Colonic mucosa (tissue), 4 donors: ENCODE measurements at regions of chr1 and their contacts with region 1.

Region 1: GRCh38 chr1:169367486-169368405 is at the starts of genes BLZF1 and NME7:
- DNase-seq: peak; percentile 99
- H3K4me3 ChIP-seq: peak within 1 kb of the TSS; percentile 68
- H3K27ac ChIP-seq: peak within 1 kb of the TSS; percentile 86
- H3K4me1 ChIP-seq: no peaks in the 10 kb centered on the region
- H3K27me3 ChIP-seq: no peaks in the 10 kb centered on the region
- CTCF ChIP-seq: no peak
- total RNA-seq, gene BLZF1: 20.5 to 24.4 TPM
- total RNA-seq, gene NME7: 4.1 to 4.8 TPM

Region 2: DNA sequence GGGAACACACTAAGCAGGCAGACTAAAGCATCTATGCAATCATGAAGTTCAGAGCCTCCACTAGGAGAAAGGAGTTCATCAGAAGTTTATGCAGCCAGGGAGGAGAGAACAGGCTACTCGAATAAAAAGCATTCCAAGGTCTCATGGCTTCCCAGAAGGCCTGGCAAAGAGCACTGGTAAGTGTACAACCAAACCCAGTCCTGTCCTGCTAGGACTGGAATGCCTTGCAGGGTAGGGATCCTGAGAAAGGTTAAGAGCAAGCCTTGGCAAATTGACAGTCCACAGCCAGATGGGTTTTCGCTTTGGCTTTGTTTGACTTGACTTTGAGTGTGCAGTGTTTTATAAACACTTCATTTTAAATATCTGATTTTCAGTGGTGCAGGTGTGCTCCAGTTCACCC is 394.9 kb before region 1 on chr1:
- intact Hi-C with region 1: no loop called
- DNase-seq: no peak
- H3K4me3 ChIP-seq: no peak overlapping the region
- H3K27ac ChIP-seq: no peak overlapping the region
- H3K4me1 ChIP-seq: no peaks in the 10 kb centered on the region
- H3K27me3 ChIP-seq: no peaks in the 10 kb centered on the region
- CTCF ChIP-seq: no peak

Region 3: GRCh38 chr1:169138866-169139670 is 228.7 kb before region 1 on chr1:
- intact Hi-C with region 1: loop called (anchors 5 kb)
- DNase-seq: no peak
- H3K4me3 ChIP-seq: no peak overlapping the region
- H3K27ac ChIP-seq: no peak overlapping the region
- H3K4me1 ChIP-seq: no peaks in the 10 kb centered on the region
- H3K27me3 ChIP-seq: no peaks in the 10 kb centered on the region
- CTCF ChIP-seq: no peak

Region 4: GRCh38 chr1:169427081-169427641 is 59.4 kb after region 1 on chr1 and contains the start of gene CCDC181:
- intact Hi-C with region 1: no loop called
- DNase-seq: no peak
- H3K4me3 ChIP-seq: no peak within 1 kb of the TSS
- H3K27ac ChIP-seq: no peak within 1 kb of the TSS
- H3K4me1 ChIP-seq: no peaks in the 10 kb centered on the region
- H3K27me3 ChIP-seq: peaks cover 14% of the 10 kb centered on the region
- CTCF ChIP-seq: no peak
- total RNA-seq, gene CCDC181: not detected

Region 5: GRCh38 chr1:169451218-169451845 is 83.6 kb after region 1 on chr1:
- intact Hi-C with region 1: no loop called
- DNase-seq: no peak
- H3K4me3 ChIP-seq: no peak overlapping the region
- H3K27ac ChIP-seq: no peak overlapping the region
- H3K4me1 ChIP-seq: no peaks in the 10 kb centered on the region
- H3K27me3 ChIP-seq: no peaks in the 10 kb centered on the region
- CTCF ChIP-seq: no peak

Region 6: GRCh38 chr1:169586395-169587255 is 218.9 kb after region 1 on chr1 and contains the start of gene F5:
- intact Hi-C with region 1: no loop called
- DNase-seq: peak; percentile 66
- H3K4me3 ChIP-seq: no peak within 1 kb of the TSS
- H3K27ac ChIP-seq: no peak within 1 kb of the TSS
- H3K4me1 ChIP-seq: no peaks in the 10 kb centered on the region
- H3K27me3 ChIP-seq: no peaks in the 10 kb centered on the region
- CTCF ChIP-seq: peak; percentile 43
- total RNA-seq, gene F5: 0.24 to 0.54 TPM